IMR-90 (cell line): ENCODE measurements at regions of chr15 and their contacts with region 1.

Region 1: DNA sequence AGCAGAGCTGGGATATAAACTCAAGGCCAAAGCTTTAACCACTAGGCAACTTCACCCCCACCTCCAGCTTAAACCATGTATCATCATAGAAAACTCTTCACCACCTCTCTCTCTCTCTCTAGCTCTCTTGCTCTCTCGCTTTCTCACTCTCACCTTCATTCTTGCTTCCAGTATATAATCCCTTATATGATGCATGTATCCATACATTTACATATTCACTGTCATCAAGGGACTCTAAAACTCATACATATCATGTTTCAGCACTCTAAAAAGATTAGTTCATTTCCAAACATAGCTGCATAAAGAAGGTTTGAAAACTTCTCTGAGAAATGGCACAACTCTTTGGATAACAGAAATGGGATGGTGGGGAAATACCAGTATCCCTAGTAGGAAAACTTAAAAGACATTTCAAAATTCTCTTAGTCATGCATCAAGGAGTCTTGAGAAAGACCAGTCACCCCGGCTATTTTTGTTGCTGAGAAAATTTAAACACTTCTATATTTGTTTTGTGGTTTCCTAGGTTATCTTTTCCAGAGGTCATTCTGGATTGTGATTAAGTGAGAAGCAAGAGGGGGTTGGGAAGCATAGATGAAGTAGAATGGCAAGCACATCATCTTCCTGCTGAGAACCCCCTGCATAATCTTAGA is 447.8 kb upstream of the THBS1 start:
- DNase-seq: peak; percentile 91
- ATAC-seq: peak; percentile 6; the same call in 1 of the 2 replicates
- H3K4me3 ChIP-seq: no peak overlapping the region
- H3K27ac ChIP-seq: peak overlapping the region; percentile 79
- H3K4me1 ChIP-seq: peaks cover 44% of the 10 kb centered on the region
- H3K27me3 ChIP-seq: no peaks in the 10 kb centered on the region
- CTCF ChIP-seq: no peak
- POLR2A ChIP-seq: no peak
- RAD21 ChIP-seq: 0 out of 2 replicates have a peak, but pooled peaks have one; percentile 4

Region 2: DNA sequence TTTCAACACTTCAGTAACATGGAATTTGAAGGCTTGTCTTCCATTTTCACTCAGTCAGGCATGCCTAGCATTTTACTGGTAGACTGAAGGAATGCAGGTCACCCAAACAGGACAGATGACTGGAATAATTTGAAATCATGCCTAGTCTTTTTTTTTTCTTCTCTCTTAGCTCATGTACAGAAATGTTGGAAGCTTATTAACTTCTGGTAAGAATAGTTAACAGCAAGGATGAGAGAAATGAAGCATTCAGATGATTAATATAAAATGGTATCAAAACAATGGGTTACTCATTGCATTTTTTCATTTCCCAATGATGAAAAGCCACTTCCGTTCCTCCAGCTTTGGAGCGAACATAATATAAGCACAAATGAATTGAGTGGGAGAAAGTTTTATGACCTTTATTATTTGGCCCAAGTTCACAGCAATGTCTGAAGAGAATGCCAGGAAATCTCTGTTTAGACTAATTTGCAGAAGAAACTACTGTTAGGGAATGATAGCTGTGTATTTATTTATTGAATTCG is 136.9 kb before region 1 on chr15:
- CTCF ChIA-PET with region 1: no interaction called
- POLR2A ChIA-PET with region 1: no interaction called
- dilution Hi-C with region 1: no loop called
- in situ Hi-C with region 1: no loop called
- intact Hi-C with region 1: loop called (anchors 2 kb)
- DNase-seq: peak; percentile 90
- ATAC-seq: peak; percentile 74
- H3K4me3 ChIP-seq: no peak overlapping the region
- H3K27ac ChIP-seq: peak overlapping the region; percentile 99; the same call in 1 of the 2 replicates
- H3K4me1 ChIP-seq: peaks cover 28% of the 10 kb centered on the region
- H3K27me3 ChIP-seq: no peaks in the 10 kb centered on the region
- CTCF ChIP-seq: no peak
- POLR2A ChIP-seq: no peak
- RAD21 ChIP-seq: no peak

Region 3: DNA sequence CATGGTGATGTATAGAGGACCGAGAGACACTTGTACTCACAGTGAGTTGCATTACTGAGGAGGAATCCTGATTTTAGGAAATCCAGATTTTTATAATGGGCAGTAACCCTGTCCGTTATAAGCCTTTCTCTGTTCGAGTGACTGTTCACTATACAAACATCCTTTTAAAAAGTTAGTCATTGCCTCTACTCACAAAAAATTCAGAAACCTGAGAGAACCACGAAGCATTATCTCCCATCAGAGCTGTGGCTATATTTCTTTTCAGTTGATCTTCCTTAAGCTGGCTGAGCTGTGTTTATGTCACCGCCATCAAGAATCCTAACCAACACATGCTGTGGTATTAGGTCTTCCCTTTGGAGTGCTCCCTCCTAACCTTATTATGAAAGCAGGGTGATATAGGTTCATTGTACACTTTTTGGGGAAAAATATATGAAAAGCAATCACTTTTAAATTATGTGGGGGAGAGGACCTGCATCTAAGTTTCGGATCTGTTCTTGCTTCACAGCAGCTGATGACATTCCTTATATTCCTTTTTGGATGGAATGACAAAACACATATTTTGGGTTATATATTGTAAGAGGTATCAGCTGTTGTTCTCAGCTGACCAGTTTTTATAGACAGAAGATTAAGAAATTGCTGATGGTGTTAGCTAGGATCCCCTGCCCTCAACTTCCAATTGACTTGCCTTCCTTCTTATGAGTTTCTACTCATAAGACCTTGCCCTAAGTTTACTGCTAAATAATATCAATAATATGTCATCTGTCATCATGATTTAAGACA is 102.6 kb before region 1 on chr15:
- CTCF ChIA-PET with region 1: no interaction called
- POLR2A ChIA-PET with region 1: interaction called, 10 read pairs
- dilution Hi-C with region 1: no loop called
- in situ Hi-C with region 1: no loop called
- intact Hi-C with region 1: no loop called
- DNase-seq: peak; percentile 56
- ATAC-seq: peak; percentile 40
- H3K4me3 ChIP-seq: no peak overlapping the region
- H3K27ac ChIP-seq: no peak overlapping the region
- H3K4me1 ChIP-seq: peaks cover 4% of the 10 kb centered on the region
- H3K27me3 ChIP-seq: no peaks in the 10 kb centered on the region
- CTCF ChIP-seq: no peak
- POLR2A ChIP-seq: no peak
- RAD21 ChIP-seq: no peak